ENCODE measurements at regions of chr7 and their contacts with region 1.

Region 1: DNA sequence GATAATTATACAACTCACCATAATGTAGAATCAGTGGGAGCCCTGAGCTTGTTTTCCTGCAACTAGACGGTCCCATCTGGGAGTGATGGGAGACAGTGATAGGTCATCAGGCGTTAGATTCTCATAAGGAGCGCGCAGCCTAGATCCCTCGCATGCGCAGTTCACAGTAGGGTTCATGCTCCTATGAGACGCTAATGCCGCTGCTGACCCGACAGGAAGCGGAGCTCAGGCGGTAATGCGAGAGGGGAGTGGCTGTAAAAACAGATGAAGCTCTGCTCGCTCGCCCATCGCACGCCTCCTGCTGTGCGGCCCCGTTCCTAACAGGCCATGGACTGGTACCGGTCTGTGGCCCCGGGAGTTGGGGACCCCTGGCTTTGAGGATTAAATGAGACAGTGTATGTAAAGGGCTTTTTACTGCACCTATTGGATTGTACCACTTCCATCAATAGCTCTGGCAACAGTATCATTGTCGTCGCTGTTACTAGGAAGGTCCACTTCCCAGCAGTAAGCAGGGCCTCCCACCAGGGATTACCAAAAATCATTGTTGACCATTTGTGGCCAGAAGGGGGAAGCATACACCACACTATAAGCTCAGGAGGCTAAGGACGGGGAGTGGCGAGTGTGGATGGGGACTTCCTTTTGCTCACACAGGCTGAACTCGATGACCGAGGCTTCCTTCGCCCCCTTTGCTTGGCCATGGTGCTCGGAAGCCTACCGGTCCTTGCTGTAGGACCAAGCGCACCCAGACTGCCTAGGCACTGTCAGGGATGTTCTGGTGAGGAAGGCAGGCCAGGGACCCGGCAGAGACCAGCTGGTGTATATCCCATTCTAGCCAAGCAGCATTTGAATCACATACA is 26.4 kb downstream of the AKR1B1 start:
- DNase-seq: peak; percentile 88
- ATAC-seq: peak; percentile 87
- H3K4me3 ChIP-seq: peak overlapping the region in 4 of 5 experiments; percentile 28 to 57 (median 46)
- H3K4me3 Mint-ChIP-seq: peak overlapping the region; percentile 86
- H3K27ac ChIP-seq: peak overlapping the region; percentile 29 to 62
- H3K27ac Mint-ChIP-seq: peak overlapping the region; percentile 86
- H3K4me1 ChIP-seq: peaks cover 17 to 23% of the 10 kb centered on the region in 2 donors
- H3K4me1 Mint-ChIP-seq: peaks cover 19% of the 10 kb centered on the region
- H3K27me3 ChIP-seq: no peaks in the 10 kb centered on the region
- H3K27me3 Mint-ChIP-seq: peaks cover 4% of the 10 kb centered on the region
- CTCF ChIP-seq: peak; percentile 82

Region 2: DNA sequence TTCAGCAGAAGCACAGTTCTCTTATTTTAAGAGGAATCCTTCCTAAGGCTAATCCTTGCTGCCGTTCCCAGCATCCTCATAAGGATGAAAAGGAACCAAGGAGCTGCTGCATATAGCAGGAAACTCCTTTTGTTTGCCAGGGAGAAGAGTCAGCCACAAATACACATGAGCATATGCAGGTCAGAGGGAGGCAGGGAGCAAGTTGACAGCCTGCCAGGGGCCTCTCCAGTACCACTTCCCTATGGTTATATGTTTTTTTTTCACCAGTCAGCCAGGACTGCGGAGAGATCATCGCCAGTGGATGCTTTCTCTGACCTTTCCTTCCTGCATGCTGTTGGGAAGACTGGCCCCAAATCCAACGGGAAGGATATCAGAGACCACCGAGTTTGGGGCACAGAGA is 155.6 kb before region 1 on chr7:
- CTCF ChIA-PET with region 1: no interaction called
- POLR2A ChIA-PET with region 1: no interaction called
- intact Hi-C with region 1: no loop called
- DNase-seq: no peak
- ATAC-seq: no peak
- H3K4me3 ChIP-seq: no peak overlapping the region
- H3K4me3 Mint-ChIP-seq: no peak overlapping the region
- H3K27ac ChIP-seq: no peak overlapping the region
- H3K27ac Mint-ChIP-seq: no peak overlapping the region
- H3K4me1 ChIP-seq: no peaks in the 10 kb centered on the region
- H3K4me1 Mint-ChIP-seq: no peaks in the 10 kb centered on the region
- H3K27me3 ChIP-seq: peaks cover 0 to 11% (median 0%) of the 10 kb centered on the region in 4 experiments
- H3K27me3 Mint-ChIP-seq: peaks cover 57% of the 10 kb centered on the region
- CTCF ChIP-seq: no peak

Region 3: DNA sequence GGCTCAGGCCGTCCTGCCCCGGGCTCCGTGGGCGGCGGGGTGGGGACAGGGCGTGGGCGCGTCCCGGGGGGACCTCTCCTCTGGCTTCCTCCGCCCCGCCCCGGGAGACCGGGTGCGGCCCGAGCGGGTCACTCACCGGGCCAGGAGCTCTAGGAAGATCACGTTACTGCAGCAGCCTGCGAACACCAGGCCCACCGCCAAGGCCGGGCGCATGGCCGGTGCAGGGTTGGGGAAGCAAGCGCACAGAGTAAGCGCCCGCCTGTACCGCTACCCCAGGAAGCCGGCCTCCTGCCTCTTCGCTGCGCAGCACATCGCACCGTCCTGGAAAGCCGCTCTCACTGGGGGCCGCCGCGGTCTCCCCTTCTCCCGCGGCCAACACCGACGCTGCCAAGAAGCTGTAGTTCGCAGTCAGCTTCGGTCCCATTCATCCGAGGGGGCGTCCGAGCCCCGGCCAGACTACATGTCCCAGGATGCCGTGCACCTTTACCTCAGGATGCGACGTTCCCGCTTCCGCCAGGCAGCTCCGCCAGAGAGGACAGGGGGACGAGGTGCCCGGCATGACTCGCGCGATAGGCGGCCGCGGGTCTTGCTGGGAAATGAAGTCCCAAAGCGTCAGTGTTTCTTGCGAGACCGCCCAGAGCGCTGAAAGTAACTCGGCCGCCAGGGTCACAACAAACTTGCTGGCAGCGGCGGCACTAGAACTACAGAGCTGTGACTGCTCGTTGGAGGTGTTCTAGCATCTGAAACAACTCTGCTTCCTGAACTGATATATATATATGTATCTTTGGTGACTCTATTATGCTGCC is 115.8 kb before region 1 on chr7 and contains the start of gene SLC35B4:
- CTCF ChIA-PET with region 1: interaction called, 6 read pairs
- POLR2A ChIA-PET with region 1: interaction called, 3 read pairs
- intact Hi-C with region 1: loop called (anchors 1 kb)
- DNase-seq: peak; percentile 94
- ATAC-seq: peak; percentile 98
- H3K4me3 ChIP-seq: peak within 1 kb of the TSS; percentile 52 to 95 (median 84)
- H3K4me3 Mint-ChIP-seq: peak within 1 kb of the TSS; percentile 95
- H3K27ac ChIP-seq: peak within 1 kb of the TSS; percentile 46 to 68
- H3K27ac Mint-ChIP-seq: peak within 1 kb of the TSS; percentile 85
- H3K4me1 ChIP-seq: peaks cover 10 to 14% of the 10 kb centered on the region in 2 donors
- H3K4me1 Mint-ChIP-seq: peaks cover 18% of the 10 kb centered on the region
- H3K27me3 ChIP-seq: no peaks in the 10 kb centered on the region
- H3K27me3 Mint-ChIP-seq: no peaks in the 10 kb centered on the region
- CTCF ChIP-seq: peak; percentile 41
- total RNA-seq, gene SLC35B4: 8.0 and 14.8 TPM in 2 replicates

Region 4: GRCh38 chr7:134480736-134481135 is 48.2 kb after region 1 on chr7:
- CTCF ChIA-PET with region 1: interaction called, 14 read pairs
- POLR2A ChIA-PET with region 1: no interaction called
- intact Hi-C with region 1: no loop called
- DNase-seq: no peak
- ATAC-seq: no peak
- H3K4me3 ChIP-seq: no peak overlapping the region
- H3K4me3 Mint-ChIP-seq: no peak overlapping the region
- H3K27ac ChIP-seq: no peak overlapping the region
- H3K27ac Mint-ChIP-seq: no peak overlapping the region
- H3K4me1 ChIP-seq: no peaks in the 10 kb centered on the region
- H3K4me1 Mint-ChIP-seq: no peaks in the 10 kb centered on the region
- H3K27me3 ChIP-seq: no peaks in the 10 kb centered on the region
- H3K27me3 Mint-ChIP-seq: peaks cover 19% of the 10 kb centered on the region
- CTCF ChIP-seq: no peak

Region 5: DNA sequence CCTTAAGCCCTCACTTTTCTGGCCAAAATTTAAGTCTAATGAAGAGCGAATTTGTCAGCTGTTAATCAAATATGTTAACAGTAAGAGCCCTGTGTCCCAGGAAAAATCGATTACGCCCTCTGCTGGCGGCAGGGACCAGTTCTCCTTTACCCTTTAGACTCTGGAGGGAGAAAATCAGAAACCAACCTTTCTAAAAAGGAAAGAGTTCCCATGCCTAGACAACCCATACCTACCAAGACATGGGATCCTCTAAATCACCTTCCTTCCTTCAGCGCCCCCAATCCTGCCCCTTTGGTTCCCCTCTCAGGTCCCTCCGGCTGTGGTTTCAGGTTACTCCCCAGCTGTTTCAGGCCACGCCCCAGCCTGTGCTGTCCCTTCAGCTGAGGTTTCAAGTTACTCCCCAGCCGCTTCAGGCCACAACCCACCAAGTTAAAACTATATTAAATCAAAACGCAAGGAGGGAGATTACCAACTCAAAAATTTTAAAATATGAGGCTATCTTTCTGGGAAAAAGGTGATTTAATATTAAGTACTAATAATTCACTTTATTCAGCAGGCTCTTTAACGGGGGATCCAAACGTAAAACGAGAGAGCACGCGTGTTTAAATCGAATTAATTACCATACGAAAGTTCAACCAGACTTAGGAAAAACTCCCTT is 115.0 kb after region 1 on chr7:
- CTCF ChIA-PET with region 1: interaction called, 143 read pairs
- POLR2A ChIA-PET with region 1: no interaction called
- intact Hi-C with region 1: loop called (anchors 1 kb)
- DNase-seq: peak; percentile 71
- ATAC-seq: peak; percentile 54
- H3K4me3 ChIP-seq: no peak overlapping the region
- H3K4me3 Mint-ChIP-seq: peak overlapping the region; percentile 49
- H3K27ac ChIP-seq: no peak overlapping the region
- H3K27ac Mint-ChIP-seq: no peak overlapping the region
- H3K4me1 ChIP-seq: peaks cover 3 to 5% of the 10 kb centered on the region in 2 donors
- H3K4me1 Mint-ChIP-seq: peaks cover 4% of the 10 kb centered on the region
- H3K27me3 ChIP-seq: no peaks in the 10 kb centered on the region
- H3K27me3 Mint-ChIP-seq: peaks cover 48% of the 10 kb centered on the region
- CTCF ChIP-seq: peak; percentile 91

Region 6: DNA sequence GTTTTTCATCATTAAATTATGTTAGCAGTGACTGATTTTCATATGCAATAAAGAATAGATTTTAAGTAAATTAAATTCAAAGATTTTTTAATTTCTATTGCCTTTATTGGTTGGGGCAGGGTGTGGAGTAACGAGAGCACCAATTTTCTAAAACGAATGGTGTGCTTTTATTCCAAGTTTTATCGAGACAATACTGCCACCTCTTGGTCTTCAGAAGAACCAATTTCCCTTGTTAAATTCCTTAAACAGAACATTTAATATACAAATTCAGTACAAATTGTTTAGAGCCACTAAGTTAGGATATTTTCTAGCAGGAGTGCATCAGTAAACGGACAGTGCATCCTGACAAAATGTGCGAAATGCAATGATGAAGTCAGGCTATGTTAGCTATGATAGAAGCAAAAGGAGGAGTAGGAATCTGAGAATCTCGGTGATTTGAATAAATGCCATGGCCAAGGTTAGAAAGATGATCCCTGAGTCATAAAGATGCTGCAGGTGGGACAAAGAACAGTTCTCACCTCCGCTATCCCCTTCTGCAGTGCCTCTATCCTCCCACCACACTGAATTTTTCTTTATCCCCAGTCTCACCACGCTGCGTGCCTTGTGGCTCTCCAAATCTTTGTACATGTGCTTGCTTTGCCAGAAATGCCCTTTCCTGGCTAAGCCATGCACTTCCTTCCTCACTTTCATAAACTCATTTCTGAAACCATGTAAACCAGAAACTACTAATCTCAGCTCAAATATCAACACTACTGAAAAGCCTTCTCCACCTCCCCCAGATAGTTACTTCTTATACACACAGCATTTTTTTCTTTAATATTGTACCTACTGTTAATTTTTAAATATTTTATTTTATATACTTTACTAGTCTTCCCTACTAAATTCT is 521.9 kb after region 1 on chr7:
- CTCF ChIA-PET with region 1: interaction called, 3 read pairs
- POLR2A ChIA-PET with region 1: no interaction called
- intact Hi-C with region 1: loop called (anchors 2 kb)
- DNase-seq: peak; percentile 47
- ATAC-seq: no peak
- H3K4me3 ChIP-seq: no peak overlapping the region
- H3K4me3 Mint-ChIP-seq: no peak overlapping the region
- H3K27ac ChIP-seq: no peak overlapping the region
- H3K27ac Mint-ChIP-seq: no peak overlapping the region
- H3K4me1 ChIP-seq: no peaks in the 10 kb centered on the region
- H3K4me1 Mint-ChIP-seq: no peaks in the 10 kb centered on the region
- H3K27me3 ChIP-seq: no peaks in the 10 kb centered on the region
- H3K27me3 Mint-ChIP-seq: no peaks in the 10 kb centered on the region
- CTCF ChIP-seq: peak; percentile 73

Region 7: GRCh38 chr7:134966681-134967080 is 534.2 kb after region 1 on chr7:
- CTCF ChIA-PET with region 1: no interaction called
- POLR2A ChIA-PET with region 1: no interaction called
- intact Hi-C with region 1: no loop called
- DNase-seq: no peak
- ATAC-seq: no peak
- H3K4me3 ChIP-seq: no peak overlapping the region
- H3K4me3 Mint-ChIP-seq: no peak overlapping the region
- H3K27ac ChIP-seq: no peak overlapping the region
- H3K27ac Mint-ChIP-seq: no peak overlapping the region
- H3K4me1 ChIP-seq: no peaks in the 10 kb centered on the region
- H3K4me1 Mint-ChIP-seq: no peaks in the 10 kb centered on the region
- H3K27me3 ChIP-seq: peaks cover 0 to 9% (median 3%) of the 10 kb centered on the region in 4 experiments
- H3K27me3 Mint-ChIP-seq: peaks cover 8% of the 10 kb centered on the region
- CTCF ChIP-seq: no peak